Activated CD8-positive, alpha-beta memory T cell treated with anti-CD3 and anti-CD28 coated beads, Interleukin-2, amount 10 ng/mL, durations not matched to agents 7 days and 5 days (primary cell): ENCODE measurements at regions of chr3 and their contacts with region 1.

Region 1: DNA sequence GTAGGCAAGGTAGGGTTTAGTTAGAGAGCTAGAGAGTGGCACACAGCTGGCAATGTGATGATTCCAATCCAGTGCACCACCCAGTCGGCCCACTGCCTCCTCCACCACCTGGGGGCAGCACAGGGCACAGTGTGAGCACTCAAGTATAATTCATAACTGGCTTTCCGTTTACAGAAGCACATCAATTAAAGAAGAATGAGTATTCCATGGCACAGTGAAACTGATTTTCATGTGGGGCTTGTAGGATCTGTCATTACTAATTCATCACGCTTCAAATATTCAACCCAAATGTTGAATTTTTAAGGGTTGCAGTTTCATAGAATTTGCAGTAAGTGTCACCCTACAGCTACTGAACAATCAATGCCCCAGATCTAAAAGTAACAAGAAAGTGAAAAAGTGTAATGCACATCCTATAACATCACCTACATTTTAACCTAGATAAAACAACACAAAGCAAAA is 149.9 kb downstream of the IGSF11 start:
- DNase-seq: peak; percentile 80
- ATAC-seq: peak; percentile 86
- H3K4me3 Mint-ChIP-seq: no peak overlapping the region
- H3K27ac Mint-ChIP-seq: no peak overlapping the region
- H3K4me1 Mint-ChIP-seq: no peaks in the 10 kb centered on the region
- H3K27me3 Mint-ChIP-seq: peaks cover 41% of the 10 kb centered on the region

Region 2: DNA sequence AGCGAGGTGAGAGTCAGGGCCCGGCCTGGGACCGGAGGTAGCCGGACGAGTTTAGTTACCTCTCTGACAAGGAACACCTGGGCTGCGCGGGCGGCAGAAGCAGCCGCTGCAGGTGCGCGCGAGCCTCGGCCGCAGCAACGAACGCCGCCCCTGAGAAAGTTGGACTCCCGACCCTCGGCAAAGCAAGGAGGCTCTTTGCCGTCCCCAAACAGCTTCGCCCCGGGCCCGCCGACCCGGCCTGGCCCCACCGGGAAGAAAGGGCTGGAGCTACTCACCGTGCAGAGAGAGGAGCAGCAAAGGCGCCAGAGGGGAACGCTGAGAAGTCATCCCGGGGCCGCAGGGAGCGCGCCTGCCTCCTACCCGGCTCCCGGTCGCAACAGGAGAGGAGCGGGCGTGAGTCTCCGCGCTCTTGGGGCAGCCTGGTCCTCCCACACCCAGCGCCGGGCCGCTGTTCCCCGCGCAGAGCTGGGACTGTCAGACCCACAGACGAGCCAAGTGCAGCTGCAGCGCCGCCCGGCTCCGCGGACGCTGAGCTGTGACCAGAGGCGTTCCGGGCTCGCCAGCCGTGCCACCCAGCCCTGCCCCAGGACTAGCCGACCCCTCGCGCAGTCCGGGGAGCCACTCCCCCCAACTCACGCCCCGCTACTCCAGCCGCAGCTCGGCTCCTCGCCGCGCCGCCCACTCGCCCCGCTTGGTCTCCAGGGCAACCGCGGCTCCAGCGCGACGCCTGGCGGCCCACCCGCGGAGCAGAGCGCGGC is 149.7 kb after region 1 on chr3 and contains the start of gene IGSF11:
- CTCF ChIA-PET with region 1: interaction called, 175 read pairs
- DNase-seq: peak; percentile 54
- ATAC-seq: peak; percentile 95
- H3K4me3 Mint-ChIP-seq: peak within 1 kb of the TSS; percentile 66
- H3K27ac Mint-ChIP-seq: no peak within 1 kb of the TSS
- H3K4me1 Mint-ChIP-seq: peaks cover 8% of the 10 kb centered on the region
- H3K27me3 Mint-ChIP-seq: peaks cover 60% of the 10 kb centered on the region
- total RNA-seq, gene IGSF11: not detected

Region 3: GRCh38 chr3:119098619-119099222 is 213.9 kb after region 1 on chr3:
- CTCF ChIA-PET with region 1: interaction called, 60 read pairs
- DNase-seq: no peak
- ATAC-seq: no peak
- H3K4me3 Mint-ChIP-seq: no peak overlapping the region
- H3K27ac Mint-ChIP-seq: no peak overlapping the region
- H3K4me1 Mint-ChIP-seq: no peaks in the 10 kb centered on the region
- H3K27me3 Mint-ChIP-seq: peaks cover 12% of the 10 kb centered on the region

Region 4: DNA sequence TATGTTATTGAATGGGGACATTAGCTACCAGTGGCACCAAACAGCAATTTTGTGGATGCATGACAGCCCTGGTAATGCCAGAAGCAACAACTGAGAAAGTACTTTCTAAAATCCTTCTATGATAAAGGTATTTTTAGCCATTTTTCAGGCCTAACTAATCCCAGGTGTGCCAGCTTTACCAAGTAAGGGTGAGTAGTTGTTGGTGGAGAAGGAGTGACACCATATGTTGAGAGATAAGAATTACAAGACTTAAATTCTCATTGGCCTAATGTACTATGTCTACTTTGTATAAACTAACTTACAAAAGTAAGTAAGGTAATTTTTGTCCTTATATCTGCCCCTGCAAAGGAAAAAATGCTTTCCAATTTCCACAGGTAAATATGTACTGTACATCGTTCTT is 796.5 kb after region 1 on chr3:
- CTCF ChIA-PET with region 1: interaction called, 27 read pairs
- DNase-seq: no peak
- ATAC-seq: no peak
- H3K4me3 Mint-ChIP-seq: no peak overlapping the region
- H3K27ac Mint-ChIP-seq: no peak overlapping the region
- H3K4me1 Mint-ChIP-seq: peaks cover 20% of the 10 kb centered on the region
- H3K27me3 Mint-ChIP-seq: no peaks in the 10 kb centered on the region